ENCODE measurements at regions of chr9 and their contacts with region 1.

Region 1: GRCh38 chr9:125143375-125144090 is at the start of gene SCAI:
- DNase-seq: peak; percentile 99
- H3K4me3 Mint-ChIP-seq: peak within 1 kb of the TSS; percentile 88
- H3K27ac Mint-ChIP-seq: peak within 1 kb of the TSS; percentile 84
- H3K4me1 Mint-ChIP-seq: peaks cover 40% of the 10 kb centered on the region
- H3K27me3 Mint-ChIP-seq: no peaks in the 10 kb centered on the region
- total RNA-seq, gene SCAI: 11.2 to 12.5 TPM

Region 2: GRCh38 chr9:125126019-125126746 is 17.4 kb before region 1 on chr9:
- CTCF ChIA-PET with region 1: interaction called, 24 read pairs
- POLR2A ChIA-PET with region 1: no interaction called
- DNase-seq: peak; percentile 92
- H3K4me3 Mint-ChIP-seq: peak overlapping the region; percentile 55
- H3K27ac Mint-ChIP-seq: peak overlapping the region; percentile 91
- H3K4me1 Mint-ChIP-seq: peaks cover 36% of the 10 kb centered on the region
- H3K27me3 Mint-ChIP-seq: no peaks in the 10 kb centered on the region

Region 3: GRCh38 chr9:125166762-125167161 is 23.2 kb after region 1 on chr9:
- CTCF ChIA-PET with region 1: no interaction called
- POLR2A ChIA-PET with region 1: no interaction called
- DNase-seq: no peak
- H3K4me3 Mint-ChIP-seq: no peak overlapping the region
- H3K27ac Mint-ChIP-seq: no peak overlapping the region
- H3K4me1 Mint-ChIP-seq: peaks cover 3% of the 10 kb centered on the region
- H3K27me3 Mint-ChIP-seq: no peaks in the 10 kb centered on the region

Measured in activated CD4-positive, alpha-beta T cell treated with anti-CD3 and anti-CD28 coated beads, Interleukin-2, amount 10 ng/mL, durations not matched to agents 7 days and 5 days (primary cell).